Activated B cell treated with CpG ODN at 0.5 μM for 24 hours (primary cell): ENCODE measurements at regions of chr10 and their contacts with region 1.

Region 1: DNA sequence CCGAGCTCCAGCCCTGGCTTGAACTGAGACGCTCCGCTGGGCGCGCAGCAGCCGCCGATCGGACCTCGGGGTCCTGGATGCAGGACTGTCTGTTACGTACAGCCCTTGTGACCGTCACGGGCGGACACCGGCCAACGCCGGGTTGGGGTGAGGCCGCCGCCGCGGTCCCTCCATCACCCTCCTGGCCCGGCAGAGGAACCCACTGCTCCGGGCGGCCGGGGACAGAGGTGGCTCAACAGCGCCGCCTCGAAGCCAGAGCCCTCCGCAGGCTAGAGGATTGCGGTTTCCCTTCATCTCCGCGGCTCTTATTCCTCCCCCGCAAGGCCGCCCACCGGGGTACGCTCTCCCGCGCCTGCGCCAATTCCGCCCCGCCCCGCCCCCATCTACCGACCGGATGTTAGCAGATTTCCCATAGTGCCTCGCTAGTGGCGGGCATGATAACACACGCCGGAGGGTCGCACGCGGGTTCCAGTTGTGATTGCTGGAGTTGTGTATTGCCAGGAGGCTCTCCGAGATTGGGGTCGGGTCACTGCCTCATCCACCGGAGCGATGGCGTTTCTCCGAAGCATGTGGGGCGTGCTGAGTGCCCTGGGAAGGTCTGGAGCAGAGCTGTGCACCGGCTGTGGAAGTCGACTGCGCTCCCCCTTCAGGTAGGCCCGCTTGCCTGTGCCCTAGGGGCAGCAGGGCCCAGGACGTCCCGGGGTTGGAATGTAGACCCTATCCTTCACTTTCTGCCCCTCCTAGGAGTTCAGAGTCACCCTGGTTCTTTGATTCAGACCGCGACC is at the start of gene TFAM:
- DNase-seq: peak; percentile 97
- ATAC-seq: peak; percentile 84
- H3K4me3 Mint-ChIP-seq: peak within 1 kb of the TSS; percentile 98
- H3K27ac Mint-ChIP-seq: peak within 1 kb of the TSS; percentile 97
- H3K4me1 Mint-ChIP-seq: peaks cover 41% of the 10 kb centered on the region
- H3K27me3 Mint-ChIP-seq: no peaks in the 10 kb centered on the region
- CTCF ChIP-seq: no peak
- total RNA-seq, gene TFAM: 59.5 and 60.2 TPM in 2 replicates

Region 2: DNA sequence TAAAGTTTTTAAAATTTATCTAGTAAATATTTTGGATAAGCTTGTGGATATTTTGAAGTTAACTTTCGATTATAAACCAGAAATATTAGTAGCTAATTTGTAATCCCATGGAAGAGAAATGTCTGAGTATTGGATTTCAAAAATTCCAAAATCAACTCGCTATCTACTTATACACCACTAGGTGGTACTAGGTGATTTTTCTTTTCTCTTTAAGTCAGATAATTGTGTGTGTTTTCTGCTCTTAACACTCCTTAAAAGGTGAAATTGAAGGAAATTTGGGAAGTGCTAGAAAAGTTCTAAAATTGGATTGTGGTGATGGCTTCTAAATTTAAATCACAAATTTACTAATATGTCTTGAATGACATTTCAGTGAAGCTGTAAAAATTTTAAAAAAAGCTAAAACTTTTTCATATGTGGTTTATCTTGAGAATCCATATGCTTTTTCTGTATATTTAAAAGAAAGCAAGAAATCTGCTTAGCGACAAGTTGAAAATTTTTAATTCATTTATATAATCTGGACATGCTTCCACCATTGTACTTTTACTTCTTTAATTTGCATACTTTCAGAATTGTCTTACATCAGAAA is 207.7 kb before region 1 on chr10:
- CTCF ChIA-PET with region 1: interaction called, 7 read pairs
- POLR2A ChIA-PET with region 1: no interaction called
- intact Hi-C with region 1: loop called (anchors 2 kb)
- DNase-seq: no peak
- ATAC-seq: no peak
- H3K4me3 Mint-ChIP-seq: no peak overlapping the region
- H3K27ac Mint-ChIP-seq: no peak overlapping the region
- H3K4me1 Mint-ChIP-seq: no peaks in the 10 kb centered on the region
- H3K27me3 Mint-ChIP-seq: peaks cover 2% of the 10 kb centered on the region
- CTCF ChIP-seq: no peak

Region 3: DNA sequence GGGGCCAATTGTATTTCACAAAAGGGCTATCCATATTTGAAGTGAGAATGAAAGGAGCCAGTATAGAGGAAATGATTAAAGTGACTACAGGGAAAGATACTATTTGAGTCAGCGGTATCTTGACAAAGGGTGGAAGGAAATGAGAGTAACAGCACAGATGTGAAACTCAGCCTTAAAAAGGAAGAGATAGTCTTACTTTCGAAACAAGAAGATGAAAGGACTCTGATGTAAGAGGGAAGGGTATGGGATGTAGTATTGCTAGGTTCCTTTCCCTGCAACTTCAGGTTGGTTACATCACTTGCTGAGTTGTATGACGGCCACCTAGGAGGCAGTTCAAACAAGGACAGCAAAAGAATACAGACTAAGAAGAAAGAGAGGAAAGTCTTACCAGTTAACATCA is 102.6 kb before region 1 on chr10:
- CTCF ChIA-PET with region 1: interaction called, 5 read pairs
- POLR2A ChIA-PET with region 1: no interaction called
- intact Hi-C with region 1: loop called (anchors 1 kb)
- DNase-seq: no peak
- ATAC-seq: peak; percentile 90
- H3K4me3 Mint-ChIP-seq: peak overlapping the region; percentile 57
- H3K27ac Mint-ChIP-seq: peak overlapping the region; percentile 88
- H3K4me1 Mint-ChIP-seq: peaks cover 27% of the 10 kb centered on the region
- H3K27me3 Mint-ChIP-seq: no peaks in the 10 kb centered on the region
- CTCF ChIP-seq: no peak

Region 4: DNA sequence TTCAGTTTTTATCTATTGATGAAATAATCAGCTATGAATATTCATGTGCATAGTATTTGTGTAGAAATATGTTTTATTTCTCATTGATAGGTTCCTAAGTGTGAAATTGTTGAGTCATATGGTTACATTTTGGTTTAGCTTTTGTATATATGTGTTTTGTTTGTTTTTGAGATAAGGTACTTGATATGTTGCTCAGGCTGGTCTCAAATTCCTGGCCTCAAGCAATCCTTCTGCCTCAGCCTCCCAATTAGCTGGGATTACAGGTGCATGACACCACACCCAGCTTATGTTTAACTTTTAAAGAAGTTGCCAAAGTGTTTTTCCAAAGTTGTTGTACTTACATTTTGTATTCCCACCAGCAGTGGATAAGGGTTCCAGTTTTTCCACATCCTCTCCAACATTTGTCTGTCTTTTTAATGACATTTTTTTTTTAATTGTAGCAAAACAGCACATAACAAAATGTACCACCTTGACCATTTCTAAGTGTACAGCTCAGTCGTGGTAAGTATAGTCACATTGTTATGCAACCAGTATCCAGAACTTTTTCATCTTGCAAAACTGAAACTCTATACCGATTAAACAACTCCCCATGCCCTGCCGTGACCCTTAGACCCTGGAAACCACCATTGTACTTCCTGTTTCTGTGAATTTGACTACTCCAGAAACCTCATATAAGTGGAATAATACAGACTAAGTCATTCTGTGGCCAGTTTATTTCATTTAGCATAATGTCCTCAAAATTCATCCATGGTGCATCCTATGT is 62.9 kb before region 1 on chr10:
- CTCF ChIA-PET with region 1: no interaction called
- POLR2A ChIA-PET with region 1: interaction called, 3 read pairs
- intact Hi-C with region 1: loop called (anchors 1 kb)
- DNase-seq: no peak
- ATAC-seq: peak; percentile 72
- H3K4me3 Mint-ChIP-seq: peak overlapping the region; percentile 3
- H3K27ac Mint-ChIP-seq: peak overlapping the region; percentile 26
- H3K4me1 Mint-ChIP-seq: peaks cover 15% of the 10 kb centered on the region
- H3K27me3 Mint-ChIP-seq: peaks cover 2% of the 10 kb centered on the region
- CTCF ChIP-seq: no peak

Region 5: DNA sequence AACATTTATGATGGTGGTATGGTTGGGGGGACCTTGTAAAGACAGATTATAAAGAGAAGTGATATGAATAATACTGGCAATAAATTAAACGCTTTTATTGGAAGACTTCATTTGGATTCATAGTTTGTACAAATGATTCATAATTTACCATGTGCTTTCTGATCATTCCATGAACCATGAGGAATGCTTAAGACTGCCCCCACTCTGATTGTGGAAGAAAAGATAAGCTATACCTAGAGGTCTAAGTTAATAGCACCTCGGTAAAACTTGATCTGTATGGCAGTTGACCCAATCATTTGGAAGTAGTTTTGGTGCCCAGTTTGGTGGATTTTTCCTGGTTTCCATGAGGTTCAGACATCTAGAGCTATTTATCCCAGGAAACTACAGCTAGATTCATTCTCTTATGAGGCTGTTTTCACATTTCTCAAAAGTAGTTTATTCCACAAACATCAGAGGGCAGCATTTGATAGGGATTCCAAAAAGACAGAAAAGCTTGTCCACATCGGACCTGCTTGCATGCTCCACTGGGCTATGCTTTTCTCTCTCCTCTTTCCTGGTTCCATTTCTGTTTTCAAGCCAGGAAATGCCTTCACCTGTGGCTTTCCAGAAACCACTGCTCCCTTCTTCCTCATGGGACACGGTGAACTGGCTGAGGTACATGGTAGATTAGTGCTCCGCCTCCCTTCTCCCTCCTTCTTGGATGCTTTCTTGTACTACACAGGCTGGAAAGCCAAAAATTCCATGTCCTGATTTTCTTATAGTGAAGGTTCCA is 29.3 kb after region 1 on chr10:
- CTCF ChIA-PET with region 1: no interaction called
- POLR2A ChIA-PET with region 1: no interaction called
- intact Hi-C with region 1: no loop called
- DNase-seq: no peak
- ATAC-seq: no peak
- H3K4me3 Mint-ChIP-seq: no peak overlapping the region
- H3K27ac Mint-ChIP-seq: no peak overlapping the region
- H3K4me1 Mint-ChIP-seq: no peaks in the 10 kb centered on the region
- H3K27me3 Mint-ChIP-seq: peaks cover 7% of the 10 kb centered on the region
- CTCF ChIP-seq: no peak

Region 6: DNA sequence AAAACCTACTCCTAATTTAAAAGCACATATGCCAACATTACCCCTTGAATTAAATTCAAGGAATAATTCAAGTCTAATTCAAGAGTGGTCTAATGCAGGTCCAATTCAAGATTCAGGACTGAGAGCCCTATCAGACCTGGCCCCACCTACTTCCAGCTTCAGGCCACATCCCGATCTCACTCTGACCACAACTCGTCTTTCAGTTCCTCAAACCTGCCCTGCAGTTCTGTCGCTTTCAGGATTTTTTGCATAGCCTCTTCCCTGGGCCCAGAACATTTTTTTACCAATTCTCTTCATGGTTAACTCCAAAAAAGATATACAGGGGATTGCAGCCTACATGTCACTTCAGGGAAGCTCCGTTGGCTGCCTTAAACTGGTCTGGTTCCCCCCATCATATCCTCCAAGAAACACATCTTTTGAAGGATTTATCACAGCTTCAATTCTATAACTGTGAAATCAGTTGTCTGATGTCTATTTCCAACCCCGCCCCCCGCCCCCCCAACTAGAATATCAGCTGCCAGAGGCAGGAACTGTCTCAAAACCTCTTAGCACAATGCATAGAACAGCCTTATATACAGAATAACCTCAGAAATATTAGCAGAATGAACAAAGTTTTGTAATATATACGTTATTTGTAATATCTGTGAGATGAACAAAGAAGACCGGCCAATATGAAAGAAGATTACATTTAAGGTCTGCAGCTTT is 1500.4 kb after region 1 on chr10:
- CTCF ChIA-PET with region 1: no interaction called
- POLR2A ChIA-PET with region 1: no interaction called
- intact Hi-C with region 1: loop called (anchors 1 kb)
- DNase-seq: peak; percentile 69
- ATAC-seq: peak; percentile 89
- H3K4me3 Mint-ChIP-seq: peak overlapping the region; percentile 45
- H3K27ac Mint-ChIP-seq: peak overlapping the region; percentile 68
- H3K4me1 Mint-ChIP-seq: peaks cover 87% of the 10 kb centered on the region
- H3K27me3 Mint-ChIP-seq: no peaks in the 10 kb centered on the region
- CTCF ChIP-seq: no peak